ENCODE measurements at regions of chr2 and their contacts with region 1.

Region 1: GRCh38 chr2:170815746-170816503 is 762 bp upstream of the GAD1 start:
- DNase-seq: peak; percentile 88
- H3K4me3 Mint-ChIP-seq: peak overlapping the region; percentile 85
- H3K27ac Mint-ChIP-seq: no peak overlapping the region
- H3K4me1 Mint-ChIP-seq: peaks cover 22% of the 10 kb centered on the region
- H3K27me3 Mint-ChIP-seq: peaks cover 31% of the 10 kb centered on the region
- CTCF ChIP-seq: peak; percentile 82

Region 2: GRCh38 chr2:170235860-170236679 is 579.9 kb before region 1 on chr2:
- CTCF ChIA-PET with region 1: no interaction called
- intact Hi-C with region 1: loop called (anchors 2 kb)
- DNase-seq: peak; percentile 45
- H3K4me3 Mint-ChIP-seq: no peak overlapping the region
- H3K27ac Mint-ChIP-seq: no peak overlapping the region
- H3K4me1 Mint-ChIP-seq: no peaks in the 10 kb centered on the region
- H3K27me3 Mint-ChIP-seq: no peaks in the 10 kb centered on the region
- CTCF ChIP-seq: peak; percentile 40

Region 3: DNA sequence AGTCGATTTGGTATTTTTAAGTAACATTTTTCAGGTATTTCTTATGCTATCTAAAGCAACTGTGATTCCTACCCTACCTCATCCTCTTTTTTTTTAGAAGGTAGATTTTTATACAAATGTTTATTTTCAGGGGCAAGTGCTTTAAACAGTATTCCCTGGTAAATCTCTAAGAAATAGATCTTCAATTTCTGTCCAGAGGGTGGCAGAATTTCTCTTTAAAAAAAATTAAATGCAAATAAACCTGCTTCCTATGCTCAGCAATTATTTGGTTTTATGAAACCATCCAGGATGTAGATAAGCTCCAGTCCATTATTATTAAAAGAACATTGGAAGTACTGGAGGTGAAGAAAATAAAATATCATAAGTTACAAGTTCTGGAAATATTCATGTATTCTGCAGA is 446.0 kb before region 1 on chr2:
- CTCF ChIA-PET with region 1: interaction called, 8 read pairs
- intact Hi-C with region 1: loop called (anchors 2 kb)
- DNase-seq: no peak
- H3K4me3 Mint-ChIP-seq: no peak overlapping the region
- H3K27ac Mint-ChIP-seq: no peak overlapping the region
- H3K4me1 Mint-ChIP-seq: peaks cover 18% of the 10 kb centered on the region
- H3K27me3 Mint-ChIP-seq: peaks cover 35% of the 10 kb centered on the region
- CTCF ChIP-seq: no peak

Region 4: GRCh38 chr2:170461884-170462283 is 354.0 kb before region 1 on chr2:
- CTCF ChIA-PET with region 1: interaction called, 4 read pairs
- intact Hi-C with region 1: loop called (anchors 10 kb)
- DNase-seq: no peak
- H3K4me3 Mint-ChIP-seq: no peak overlapping the region
- H3K27ac Mint-ChIP-seq: no peak overlapping the region
- H3K4me1 Mint-ChIP-seq: peaks cover 24% of the 10 kb centered on the region
- H3K27me3 Mint-ChIP-seq: no peaks in the 10 kb centered on the region
- CTCF ChIP-seq: no peak

Region 5: DNA sequence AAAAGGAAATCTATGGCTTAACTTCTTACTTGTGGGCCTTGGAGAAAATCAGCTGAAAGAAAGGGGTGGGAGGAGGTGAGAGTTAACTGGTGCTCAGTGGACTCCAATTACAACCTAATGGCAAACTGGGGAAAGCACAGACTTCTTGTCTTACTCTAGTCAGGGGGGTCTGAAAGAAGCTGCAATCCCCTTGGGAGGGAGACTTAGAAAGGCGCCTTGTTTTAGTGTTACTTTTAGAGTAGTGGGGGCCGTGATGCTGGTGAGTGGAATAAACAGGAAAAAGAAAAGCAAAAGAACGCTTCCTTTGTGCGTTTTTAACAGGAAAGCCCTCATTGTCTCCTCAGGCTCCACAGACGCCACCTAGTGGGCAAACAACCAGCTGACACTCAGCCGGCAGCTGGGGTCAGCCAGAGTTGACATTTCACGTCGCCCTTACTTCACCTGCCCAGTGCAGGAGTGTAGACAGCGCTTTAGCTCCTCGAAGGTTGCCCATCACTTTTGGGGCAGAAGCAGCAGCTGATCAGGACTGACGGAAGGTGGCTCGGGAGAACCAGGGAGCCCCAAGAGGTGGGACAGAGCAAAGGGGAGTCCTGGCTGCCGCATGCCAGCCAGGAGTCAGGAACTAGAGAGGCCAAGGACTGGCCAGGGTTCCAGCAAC is 57.2 kb after region 1 on chr2:
- CTCF ChIA-PET with region 1: interaction called, 3 read pairs
- intact Hi-C with region 1: loop called (anchors 2 kb)
- DNase-seq: peak; percentile 85
- H3K4me3 Mint-ChIP-seq: peak overlapping the region; percentile 56
- H3K27ac Mint-ChIP-seq: peak overlapping the region; percentile 30
- H3K4me1 Mint-ChIP-seq: peaks cover 13% of the 10 kb centered on the region
- H3K27me3 Mint-ChIP-seq: no peaks in the 10 kb centered on the region
- CTCF ChIP-seq: peak; percentile 89

Region 6: DNA sequence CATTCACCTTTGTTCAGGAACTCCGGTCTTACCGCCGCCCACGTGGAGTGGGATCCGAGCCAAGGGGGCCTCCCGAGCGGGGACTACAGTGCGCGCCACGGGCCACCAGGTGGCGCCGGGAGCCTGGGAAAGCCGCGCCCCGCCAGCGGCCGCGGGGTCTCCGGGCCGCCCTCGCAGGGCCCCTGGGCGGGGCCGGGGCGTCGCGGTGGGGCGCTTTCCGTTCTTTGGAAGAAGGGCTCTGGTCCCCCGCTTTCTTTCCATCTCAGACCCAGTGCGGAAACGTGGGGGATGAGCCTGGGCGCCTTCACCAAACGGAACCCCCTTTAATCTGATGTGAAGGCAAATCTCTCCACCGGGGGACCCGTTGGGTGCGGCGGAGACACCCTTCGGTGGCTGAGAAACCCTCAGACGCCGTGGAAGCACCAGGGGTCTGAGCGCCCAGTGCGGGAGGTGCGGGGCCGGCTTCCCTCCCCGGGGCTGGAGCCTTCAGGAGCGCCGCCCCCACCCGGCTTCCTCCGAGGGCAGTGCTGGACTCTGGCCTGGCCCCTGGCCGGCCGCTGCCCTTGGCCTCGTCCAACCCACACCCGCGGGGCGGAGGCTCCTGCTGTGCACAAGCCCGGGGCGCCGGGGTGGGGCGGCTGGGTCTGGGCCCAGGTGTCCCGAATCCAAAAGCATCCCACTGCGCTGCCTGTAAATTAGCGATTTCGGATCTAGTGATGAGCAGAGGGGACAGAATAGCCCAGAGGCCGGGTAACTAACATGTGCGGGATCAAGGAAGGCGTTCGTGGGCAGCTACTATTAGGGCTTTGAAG is 157.8 kb after region 1 on chr2:
- CTCF ChIA-PET with region 1: no interaction called
- intact Hi-C with region 1: no loop called
- DNase-seq: peak; percentile 91
- H3K4me3 Mint-ChIP-seq: peak overlapping the region; percentile 65
- H3K27ac Mint-ChIP-seq: peak overlapping the region; percentile 70
- H3K4me1 Mint-ChIP-seq: peaks cover 18% of the 10 kb centered on the region
- H3K27me3 Mint-ChIP-seq: no peaks in the 10 kb centered on the region
- CTCF ChIP-seq: peak; percentile 96

Region 7: GRCh38 chr2:170997893-170998597 is 182.1 kb after region 1 on chr2:
- CTCF ChIA-PET with region 1: no interaction called
- intact Hi-C with region 1: no loop called
- DNase-seq: no peak
- H3K4me3 Mint-ChIP-seq: no peak overlapping the region
- H3K27ac Mint-ChIP-seq: no peak overlapping the region
- H3K4me1 Mint-ChIP-seq: no peaks in the 10 kb centered on the region
- H3K27me3 Mint-ChIP-seq: no peaks in the 10 kb centered on the region
- CTCF ChIP-seq: no peak